ENCODE measurements at regions of chr2 and their contacts with region 1.

Region 1: DNA sequence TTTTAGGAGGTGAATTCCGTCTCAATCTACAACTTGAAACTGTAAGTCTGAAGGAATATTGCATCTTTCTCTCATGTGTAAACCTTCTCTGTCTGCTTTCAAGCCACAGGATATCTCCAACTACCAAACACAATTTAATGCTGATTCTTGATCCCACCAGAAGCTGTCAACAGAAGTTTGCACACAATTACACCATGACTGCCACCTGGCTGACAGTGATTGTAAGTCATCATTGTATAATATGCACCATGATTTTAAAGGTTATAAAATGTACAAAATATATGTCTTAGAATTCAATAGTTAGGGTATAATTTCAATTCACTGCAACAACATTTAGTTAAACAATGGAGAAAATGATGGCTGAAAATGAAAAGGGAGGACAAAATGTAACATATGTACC is 18.4 kb downstream of the PREPL start:
- DNase-seq: peak; percentile 43
- ATAC-seq: no peak
- H3K4me3 ChIP-seq: no peak overlapping the region
- H3K4me3 Mint-ChIP-seq: no peak overlapping the region
- H3K27ac ChIP-seq: no peak overlapping the region
- H3K27ac Mint-ChIP-seq: no peak overlapping the region
- H3K4me1 ChIP-seq: no peaks in the 10 kb centered on the region
- H3K4me1 Mint-ChIP-seq: no peaks in the 10 kb centered on the region
- H3K27me3 ChIP-seq: no peaks in the 10 kb centered on the region
- H3K27me3 Mint-ChIP-seq: no peaks in the 10 kb centered on the region
- CTCF ChIP-seq: peak; percentile 57

Region 2: DNA sequence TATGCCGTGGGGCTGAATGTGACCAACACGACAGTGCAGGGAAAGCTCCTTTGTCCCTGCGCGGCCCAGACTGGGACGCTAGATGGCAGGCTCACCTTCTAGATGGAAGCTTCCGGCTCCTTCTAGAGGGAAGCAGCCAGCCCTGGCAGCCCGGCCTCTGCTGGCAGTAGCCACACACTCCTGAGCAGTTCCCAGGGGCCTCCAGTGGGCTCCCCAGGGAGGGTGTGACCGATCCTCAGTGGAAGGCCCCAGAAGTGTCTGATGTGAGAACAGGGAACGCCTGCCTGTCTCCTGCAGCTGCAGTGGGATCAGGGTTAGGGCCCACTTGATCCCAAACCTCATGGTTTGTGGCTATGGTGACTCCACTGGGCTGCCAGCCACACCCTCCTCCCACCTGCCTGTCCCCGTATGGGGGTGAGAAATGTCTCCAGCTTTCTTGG is 298.6 kb before region 1 on chr2:
- CTCF ChIA-PET with region 1: interaction called, 6 read pairs
- POLR2A ChIA-PET with region 1: no interaction called
- intact Hi-C with region 1: loop called (anchors 1 kb)
- DNase-seq: peak; percentile 80
- ATAC-seq: peak; percentile 98
- H3K4me3 ChIP-seq: no peak overlapping the region
- H3K4me3 Mint-ChIP-seq: no peak overlapping the region
- H3K27ac ChIP-seq: no peak overlapping the region
- H3K27ac Mint-ChIP-seq: no peak overlapping the region
- H3K4me1 ChIP-seq: peaks cover 0 to 6% of the 10 kb centered on the region in 2 donors
- H3K4me1 Mint-ChIP-seq: peaks cover 7% of the 10 kb centered on the region
- H3K27me3 ChIP-seq: no peaks in the 10 kb centered on the region
- H3K27me3 Mint-ChIP-seq: peaks cover 3% of the 10 kb centered on the region
- CTCF ChIP-seq: peak; percentile 84

Region 3: DNA sequence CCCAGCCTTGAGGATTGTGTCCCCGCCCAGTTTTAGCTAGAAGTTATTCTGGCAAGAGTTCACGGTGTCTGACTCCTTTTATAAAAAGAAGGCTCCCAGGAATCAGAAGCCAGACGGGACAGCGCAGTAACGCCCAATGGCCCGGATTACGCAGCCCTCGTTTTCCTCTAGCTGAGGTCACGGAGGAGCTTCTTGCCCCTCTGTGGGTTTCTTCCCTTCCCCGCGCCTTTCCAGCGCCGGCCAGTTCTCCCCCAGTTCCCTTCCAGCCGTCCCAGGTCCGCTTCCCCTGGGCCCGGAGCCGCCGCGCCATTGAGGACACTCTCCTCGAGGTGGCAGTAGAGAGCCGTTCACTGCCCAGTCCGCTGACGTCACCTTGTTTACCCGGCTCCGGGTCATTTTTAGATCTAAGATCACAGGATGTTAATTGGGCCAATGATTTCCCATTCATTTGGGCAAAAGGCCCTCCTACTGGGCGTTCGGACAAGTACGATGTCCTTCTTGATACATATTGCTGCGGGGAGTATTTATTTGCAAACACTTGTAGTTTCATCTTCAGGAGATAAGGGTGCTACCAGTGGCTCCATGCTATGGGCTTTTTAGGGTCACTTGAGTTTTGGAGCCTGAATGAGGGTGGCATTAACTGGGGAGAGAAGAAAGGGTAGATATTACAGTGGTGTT is 255.7 kb before region 1 on chr2:
- CTCF ChIA-PET with region 1: interaction called, 5 read pairs
- POLR2A ChIA-PET with region 1: no interaction called
- intact Hi-C with region 1: loop called (anchors 1 kb)
- DNase-seq: peak; percentile 87
- ATAC-seq: peak; percentile 97
- H3K4me3 ChIP-seq: peak overlapping the region; percentile 43 to 70 (median 57)
- H3K4me3 Mint-ChIP-seq: peak overlapping the region; percentile 66
- H3K27ac ChIP-seq: peak overlapping the region; percentile 44 to 71
- H3K27ac Mint-ChIP-seq: peak overlapping the region; percentile 54
- H3K4me1 ChIP-seq: peaks cover 24 to 32% of the 10 kb centered on the region in 2 donors
- H3K4me1 Mint-ChIP-seq: peaks cover 23% of the 10 kb centered on the region
- H3K27me3 ChIP-seq: no peaks in the 10 kb centered on the region
- H3K27me3 Mint-ChIP-seq: no peaks in the 10 kb centered on the region
- CTCF ChIP-seq: peak; percentile 97

Region 4: GRCh38 chr2:44244129-44244871 is 98.6 kb before region 1 on chr2:
- CTCF ChIA-PET with region 1: interaction called, 3 read pairs
- POLR2A ChIA-PET with region 1: no interaction called
- intact Hi-C with region 1: loop called (anchors 10 kb)
- DNase-seq: peak; percentile 76
- ATAC-seq: peak; percentile 80
- H3K4me3 ChIP-seq: peak overlapping the region in 3 of 5 experiments; percentile 22 to 52 (median 24)
- H3K4me3 Mint-ChIP-seq: peak overlapping the region; percentile 82
- H3K27ac ChIP-seq: no peak overlapping the region
- H3K27ac Mint-ChIP-seq: peak overlapping the region; percentile 8
- H3K4me1 ChIP-seq: peaks cover 5 to 7% of the 10 kb centered on the region in 2 donors
- H3K4me1 Mint-ChIP-seq: peaks cover 15% of the 10 kb centered on the region
- H3K27me3 ChIP-seq: no peaks in the 10 kb centered on the region
- H3K27me3 Mint-ChIP-seq: no peaks in the 10 kb centered on the region
- CTCF ChIP-seq: peak; percentile 88

Measured in B cell (primary cell).